HepG2 (cell line): ENCODE measurements at regions of chr5 and their contacts with region 1.

Region 1: GRCh38 chr5:95352691-95353090 is 38.5 kb upstream of the FAM81B start:
- DNase-seq: no peak
- ATAC-seq: no peak
- H3K4me3 ChIP-seq: no peak overlapping the region
- H3K27ac ChIP-seq: no peak overlapping the region
- H3K4me1 ChIP-seq: no peaks in the 10 kb centered on the region
- H3K27me3 ChIP-seq: no peaks in the 10 kb centered on the region
- CTCF ChIP-seq: no peak
- EP300 ChIP-seq: no peak
- POLR2A ChIP-seq: no peak
- RAD21 ChIP-seq: no peak

Region 2: GRCh38 chr5:95334900-95335538 is 17.7 kb before region 1 on chr5:
- CTCF ChIA-PET with region 1: no interaction called
- POLR2A ChIA-PET with region 1: no interaction called
- in situ Hi-C with region 1: no loop called
- intact Hi-C with region 1: loop called (anchors 1 kb)
- DNase-seq: no peak
- ATAC-seq: no peak
- H3K4me3 ChIP-seq: no peak overlapping the region
- H3K27ac ChIP-seq: no peak overlapping the region
- H3K4me1 ChIP-seq: no peaks in the 10 kb centered on the region
- H3K27me3 ChIP-seq: no peaks in the 10 kb centered on the region
- CTCF ChIP-seq: no peak
- EP300 ChIP-seq: no peak
- POLR2A ChIP-seq: no peak
- RAD21 ChIP-seq: no peak